ENCODE measurements at regions of chr14 and their contacts with region 1.

Region 1: DNA sequence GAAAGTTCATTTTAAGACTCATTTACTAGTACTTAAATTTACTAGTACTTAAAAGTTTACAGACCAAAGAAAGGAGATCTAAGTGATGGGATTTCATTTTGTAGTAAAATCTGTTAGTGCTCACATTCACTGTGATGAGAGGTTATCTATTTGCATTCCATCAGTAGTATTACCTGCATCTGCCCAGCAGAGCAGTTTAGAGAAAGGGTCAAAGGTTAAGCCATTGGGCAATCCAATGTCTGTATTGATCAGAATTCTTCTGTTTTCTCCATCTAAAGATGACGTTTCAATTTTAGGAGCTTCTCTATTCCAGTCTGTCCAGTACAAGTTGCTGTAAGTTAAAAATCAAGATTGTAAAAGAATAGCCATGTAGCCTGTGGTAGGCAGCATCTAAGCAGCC is 18.3 kb downstream of the RTRAF start:
- DNase-seq: no peak
- H3K4me3 ChIP-seq: peak overlapping the region in 1 of 4 experiments; percentile 20; a peak in 1 of 8 replicates
- H3K27ac ChIP-seq: no peak overlapping the region
- H3K4me1 ChIP-seq: peaks cover 0 to 3% (median under 1%) of the 10 kb centered on the region in 4 experiments; a peak in 3 of 7 replicates
- H3K27me3 ChIP-seq: no peaks in the 10 kb centered on the region
- CTCF ChIP-seq: no peak
- EP300 ChIP-seq: no peak
- POLR2A ChIP-seq: no peak
- RAD21 ChIP-seq: no peak

Region 2: DNA sequence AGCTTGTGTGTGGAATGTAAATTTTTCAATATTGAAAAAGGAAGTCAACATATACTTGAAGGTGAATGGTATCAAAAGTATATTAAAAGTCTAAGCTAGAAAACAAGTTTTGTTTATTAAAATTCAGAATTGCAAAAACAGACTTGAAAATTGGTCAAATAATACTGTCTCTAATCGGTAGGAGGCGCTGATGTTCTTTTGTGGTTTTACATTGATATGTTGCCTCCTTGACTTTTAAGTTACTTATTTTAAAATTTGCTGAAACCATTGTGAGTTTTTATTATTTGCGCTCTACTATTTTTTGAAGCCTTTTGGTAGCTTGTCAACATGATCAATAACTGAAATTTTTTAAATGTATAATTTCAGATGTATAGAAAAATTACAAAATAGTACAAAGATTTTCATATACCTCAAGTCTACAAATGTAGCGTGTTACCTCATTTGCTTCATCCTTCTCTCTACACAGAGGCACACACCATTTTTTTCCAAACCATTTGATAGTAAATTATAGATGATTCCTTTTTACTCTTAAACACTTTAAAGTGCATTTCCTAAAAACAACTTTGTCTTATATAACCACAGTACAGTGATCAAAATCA is 11.4 kb before region 1 on chr14:
- CTCF ChIA-PET with region 1: interaction called, 27 read pairs
- POLR2A ChIA-PET with region 1: interaction called, 4 read pairs
- DNase-seq: no peak
- H3K4me3 ChIP-seq: no peak overlapping the region
- H3K27ac ChIP-seq: no peak overlapping the region
- H3K4me1 ChIP-seq: no peaks in the 10 kb centered on the region
- H3K27me3 ChIP-seq: no peaks in the 10 kb centered on the region
- CTCF ChIP-seq: peak in 2 of 3 experiments; percentile 21 to 48; a peak in 2 of 4 replicates
- EP300 ChIP-seq: no peak
- POLR2A ChIP-seq: no peak
- RAD21 ChIP-seq: peak; percentile 57 to 66

Region 3: DNA sequence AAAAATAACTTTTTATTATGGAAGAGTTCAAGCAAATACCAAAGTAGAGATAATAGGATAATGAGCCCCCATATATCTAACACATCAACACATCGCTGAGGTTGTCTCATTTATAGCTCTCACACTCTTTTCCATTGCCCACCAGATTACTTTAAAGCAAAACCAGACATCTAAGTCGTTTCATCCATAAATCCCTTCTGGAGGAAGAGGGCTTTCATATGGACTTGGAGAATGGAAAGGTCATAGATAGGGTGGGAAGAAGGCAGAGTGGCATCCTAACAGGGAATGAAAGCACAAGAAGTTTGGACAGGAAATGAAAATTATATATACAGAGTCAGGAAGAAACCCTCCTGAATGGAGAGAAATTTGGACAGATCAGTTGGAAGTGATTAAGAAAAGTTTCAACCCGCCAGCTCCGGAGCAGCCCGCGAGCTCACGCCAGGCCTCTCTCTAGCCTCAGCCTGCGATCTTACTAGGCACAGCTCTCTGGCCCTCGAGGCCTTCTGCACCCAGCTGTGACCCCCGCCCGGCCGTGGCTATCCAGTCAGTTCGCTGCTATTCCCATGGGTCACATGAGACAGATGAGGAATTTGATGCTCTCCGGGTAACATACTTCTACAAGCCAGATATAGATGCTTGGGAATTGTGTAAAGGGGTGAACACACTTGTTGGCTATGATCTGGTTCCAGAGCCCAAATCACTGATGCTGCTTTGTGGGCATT is 109.6 kb after region 1 on chr14:
- CTCF ChIA-PET with region 1: no interaction called
- POLR2A ChIA-PET with region 1: no interaction called
- DNase-seq: no peak
- H3K4me3 ChIP-seq: no peak overlapping the region
- H3K27ac ChIP-seq: no peak overlapping the region
- H3K4me1 ChIP-seq: no peaks in the 10 kb centered on the region
- H3K27me3 ChIP-seq: no peaks in the 10 kb centered on the region
- CTCF ChIP-seq: no peak
- EP300 ChIP-seq: no peak
- POLR2A ChIP-seq: no peak
- RAD21 ChIP-seq: no peak

Measured in H1 (cell line).